ENCODE measurements at regions of chr4 and their contacts with region 1.

Region 1: DNA sequence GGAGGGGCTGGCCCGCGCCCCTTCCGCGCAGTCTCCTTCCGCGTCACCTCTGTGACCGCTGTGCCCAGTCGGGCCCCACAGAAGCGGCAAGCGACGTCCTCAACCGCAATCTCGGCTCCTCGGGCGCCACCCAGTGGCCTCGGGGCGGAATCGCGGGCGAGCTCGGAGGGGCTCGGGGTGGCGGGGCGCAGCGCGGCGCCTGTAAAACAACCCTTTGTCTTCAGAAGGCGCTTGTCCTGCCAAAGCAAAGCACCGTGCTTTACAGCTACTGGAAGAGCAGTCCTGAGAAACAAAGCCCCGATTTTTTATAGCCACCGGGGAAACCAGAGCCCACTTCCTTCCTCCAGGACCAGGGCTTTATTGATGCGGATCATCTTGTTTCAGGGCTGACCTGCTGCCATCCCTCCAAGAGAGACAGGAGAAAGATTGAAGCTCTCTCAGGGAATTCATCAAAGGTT is 37.3 kb upstream of the CDKN2AIP start:
- DNase-seq: peak; percentile 87 to 96 (median 90)
- ATAC-seq: peak; percentile 97
- H3K4me3 ChIP-seq: peak overlapping the region; percentile 54 to 65
- H3K4me3 Mint-ChIP-seq: peak overlapping the region; percentile 85
- H3K27ac ChIP-seq: peak overlapping the region; percentile 52 to 72
- H3K27ac Mint-ChIP-seq: peak overlapping the region; percentile 89
- H3K4me1 ChIP-seq: peaks cover 6% of the 10 kb centered on the region
- H3K4me1 Mint-ChIP-seq: peaks cover 13% of the 10 kb centered on the region
- H3K27me3 ChIP-seq: no peaks in the 10 kb centered on the region
- H3K27me3 Mint-ChIP-seq: no peaks in the 10 kb centered on the region
- CTCF ChIP-seq: peak; percentile 74

Region 2: GRCh38 chr4:182938205-182938645 is 468.9 kb before region 1 on chr4:
- CTCF ChIA-PET with region 1: no interaction called
- POLR2A ChIA-PET with region 1: no interaction called
- intact Hi-C with region 1: loop called in 1 of 2 experiments (anchors 1 kb)
- DNase-seq: peak; percentile 31 to 76 (median 65)
- ATAC-seq: peak; percentile 74
- H3K4me3 ChIP-seq: no peak overlapping the region
- H3K4me3 Mint-ChIP-seq: no peak overlapping the region
- H3K27ac ChIP-seq: no peak overlapping the region
- H3K27ac Mint-ChIP-seq: no peak overlapping the region
- H3K4me1 ChIP-seq: no peaks in the 10 kb centered on the region
- H3K4me1 Mint-ChIP-seq: peaks cover 7% of the 10 kb centered on the region
- H3K27me3 ChIP-seq: no peaks in the 10 kb centered on the region
- H3K27me3 Mint-ChIP-seq: peaks cover 14% of the 10 kb centered on the region
- CTCF ChIP-seq: peak; percentile 83

Region 3: DNA sequence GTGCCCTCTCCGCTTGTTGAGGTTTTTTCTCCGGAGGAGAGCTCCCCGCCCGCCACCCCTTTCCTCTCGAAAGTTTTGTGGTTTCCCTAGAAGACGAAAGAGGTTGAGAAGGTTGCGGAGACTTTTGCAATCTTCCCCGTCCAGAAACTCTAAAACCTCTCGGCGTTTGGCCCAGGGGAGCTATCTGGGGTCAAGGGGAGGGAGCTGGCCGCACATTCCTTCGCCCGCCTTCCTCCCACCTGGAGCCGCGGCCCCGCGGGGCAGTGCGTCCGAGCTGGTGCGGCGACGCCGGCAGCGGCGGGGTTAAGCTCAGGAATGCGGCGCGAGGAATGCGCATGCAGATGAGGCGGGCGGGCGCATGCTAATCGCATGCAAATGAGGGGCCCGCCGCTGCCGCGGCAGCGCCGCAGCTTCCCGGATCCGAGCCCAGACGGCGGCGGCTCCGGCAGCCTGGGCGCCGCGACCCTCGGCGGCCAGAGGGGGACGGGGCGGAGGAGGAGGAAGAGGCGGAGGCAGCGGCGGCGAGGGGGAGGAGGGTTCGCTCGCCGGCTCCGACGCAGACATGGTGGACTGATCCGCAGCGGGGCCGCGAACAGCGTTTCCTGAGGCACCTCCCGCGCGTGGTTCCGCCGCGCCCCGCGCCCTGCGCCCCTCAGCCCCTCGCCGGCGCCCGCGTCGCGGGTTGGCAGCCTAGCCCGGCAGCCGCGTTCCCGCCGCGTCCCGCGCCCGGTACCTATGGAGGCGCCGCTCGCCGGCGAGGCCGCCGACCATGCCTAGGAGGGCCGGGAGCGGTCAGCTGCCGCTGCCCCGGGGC is 308.2 kb before region 1 on chr4 and contains the start of gene WWC2:
- CTCF ChIA-PET with region 1: no interaction called
- POLR2A ChIA-PET with region 1: no interaction called
- intact Hi-C with region 1: loop called in 1 of 2 experiments (anchors 1 kb)
- DNase-seq: peak in 8 of 9 experiments; percentile 46 to 78 (median 60)
- ATAC-seq: peak; percentile 78
- H3K4me3 ChIP-seq: peak within 1 kb of the TSS; percentile 62 to 86
- H3K4me3 Mint-ChIP-seq: peak within 1 kb of the TSS; percentile 76
- H3K27ac ChIP-seq: peak within 1 kb of the TSS in 1 of 2 experiments; percentile 22
- H3K27ac Mint-ChIP-seq: no peak within 1 kb of the TSS
- H3K4me1 ChIP-seq: peaks cover 18% of the 10 kb centered on the region
- H3K4me1 Mint-ChIP-seq: peaks cover 10% of the 10 kb centered on the region
- H3K27me3 ChIP-seq: peaks cover 0 to 7% of the 10 kb centered on the region in 2 experiments
- H3K27me3 Mint-ChIP-seq: peaks cover 34% of the 10 kb centered on the region
- CTCF ChIP-seq: no peak
- total RNA-seq, gene WWC2: 0.73 to 1.8 TPM

Region 4: DNA sequence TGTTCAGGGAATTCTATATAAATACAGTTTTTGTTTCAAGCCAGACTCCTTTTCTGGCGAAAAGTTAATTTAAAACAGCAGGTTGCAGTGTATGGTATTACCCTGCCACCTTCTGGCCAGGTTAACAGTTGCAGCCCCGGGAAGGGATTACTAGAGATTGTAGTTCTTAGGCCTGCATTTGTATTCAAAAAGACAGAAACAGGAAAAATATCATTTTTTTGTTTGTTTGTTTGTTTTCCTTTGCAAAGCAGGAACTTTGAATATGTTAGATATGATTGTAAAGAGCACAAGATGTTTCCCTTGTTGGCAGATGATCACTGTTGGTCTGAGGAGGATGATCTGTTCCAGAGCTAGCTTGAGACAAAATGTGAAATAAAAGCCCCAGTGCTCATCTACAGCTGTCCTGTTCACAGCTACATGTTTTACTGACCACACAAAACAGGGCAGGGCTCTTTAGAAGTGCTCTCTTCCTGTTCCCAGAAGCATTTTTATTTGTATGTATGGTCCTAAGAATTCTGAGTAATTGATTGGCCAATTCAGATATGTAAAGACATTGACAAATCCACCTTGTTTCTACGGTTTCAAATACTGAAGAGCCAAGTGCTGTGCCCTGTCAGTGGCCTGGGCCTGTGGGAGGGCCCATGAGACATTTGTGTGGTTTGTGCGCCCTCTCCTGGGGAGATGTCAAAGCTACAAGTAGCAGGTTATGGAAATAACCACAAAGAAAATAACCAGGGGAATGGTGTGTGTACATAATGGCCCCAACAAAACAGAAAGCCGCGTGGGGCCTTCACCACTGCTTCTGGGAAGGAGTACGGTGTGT is 145.0 kb before region 1 on chr4:
- CTCF ChIA-PET with region 1: no interaction called
- POLR2A ChIA-PET with region 1: no interaction called
- intact Hi-C with region 1: loop called in 1 of 2 experiments (anchors 5 kb)
- DNase-seq: peak; percentile 36 to 76 (median 69)
- ATAC-seq: peak; percentile 89
- H3K4me3 ChIP-seq: no peak overlapping the region
- H3K4me3 Mint-ChIP-seq: no peak overlapping the region
- H3K27ac ChIP-seq: no peak overlapping the region
- H3K27ac Mint-ChIP-seq: peak overlapping the region; percentile 7
- H3K4me1 ChIP-seq: peaks cover 4% of the 10 kb centered on the region
- H3K4me1 Mint-ChIP-seq: peaks cover 6% of the 10 kb centered on the region
- H3K27me3 ChIP-seq: no peaks in the 10 kb centered on the region
- H3K27me3 Mint-ChIP-seq: peaks cover 1% of the 10 kb centered on the region
- CTCF ChIP-seq: peak; percentile 73

Region 5: GRCh38 chr4:183430317-183430993 is 23.3 kb after region 1 on chr4:
- CTCF ChIA-PET with region 1: interaction called, 7 read pairs
- POLR2A ChIA-PET with region 1: interaction called, 4 read pairs
- intact Hi-C with region 1: loop called in 1 of 2 experiments (anchors 1 kb)
- DNase-seq: peak in 7 of 9 experiments; percentile 6 to 65 (median 32)
- ATAC-seq: peak; percentile 58
- H3K4me3 ChIP-seq: no peak overlapping the region
- H3K4me3 Mint-ChIP-seq: peak overlapping the region; percentile 69
- H3K27ac ChIP-seq: peak overlapping the region; percentile 2 to 6
- H3K27ac Mint-ChIP-seq: peak overlapping the region; percentile 88
- H3K4me1 ChIP-seq: peaks cover 27% of the 10 kb centered on the region
- H3K4me1 Mint-ChIP-seq: peaks cover 33% of the 10 kb centered on the region
- H3K27me3 ChIP-seq: no peaks in the 10 kb centered on the region
- H3K27me3 Mint-ChIP-seq: no peaks in the 10 kb centered on the region
- CTCF ChIP-seq: no peak